ENCODE measurements at regions of chr9 and their contacts with region 1.

Region 1: GRCh38 chr9:130884980-130885696 is 11.5 kb downstream of the QRFP start:
- DNase-seq: peak; percentile 87
- H3K4me3 ChIP-seq: no peak overlapping the region
- H3K27ac ChIP-seq: peak overlapping the region in 3 of 4 donors; percentile 66 to 76 (median 74)
- H3K4me1 ChIP-seq: peaks cover 0 to 41% (median 37%) of the 10 kb centered on the region in 4 donors
- H3K27me3 ChIP-seq: no peaks in the 10 kb centered on the region
- CTCF ChIP-seq: no peak
- EP300 ChIP-seq: no peak
- POLR2A ChIP-seq: no peak

Region 2: DNA sequence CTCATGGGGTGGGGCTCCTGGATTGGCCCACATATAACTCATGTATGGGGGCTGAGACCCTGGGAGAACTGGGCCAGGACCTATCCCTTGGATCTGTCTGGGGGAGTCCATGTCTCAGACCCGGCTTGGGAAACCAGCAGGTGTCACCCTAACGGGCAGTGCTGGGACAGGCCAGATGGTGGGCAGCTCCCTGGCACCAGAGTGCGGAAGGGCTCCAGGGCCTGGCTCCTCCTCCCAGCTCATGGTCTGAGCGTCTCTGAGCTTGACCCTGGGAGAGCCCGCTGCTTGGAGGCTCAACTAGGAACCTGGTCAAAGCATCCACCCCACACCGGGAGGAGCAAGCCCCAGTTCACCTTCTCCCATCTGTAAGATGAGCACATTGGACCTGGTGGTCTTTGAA is 728.5 kb before region 1 on chr9:
- intact Hi-C with region 1: no loop called
- DNase-seq: no peak
- H3K4me3 ChIP-seq: no peak overlapping the region
- H3K27ac ChIP-seq: no peak overlapping the region
- H3K4me1 ChIP-seq: peaks cover 0 to 4% (median 0%) of the 10 kb centered on the region in 4 donors
- H3K27me3 ChIP-seq: no peaks in the 10 kb centered on the region
- CTCF ChIP-seq: peak in 1 of 4 experiments; percentile 14
- EP300 ChIP-seq: no peak
- POLR2A ChIP-seq: no peak

Region 3: GRCh38 chr9:131046581-131047202 is 161.6 kb after region 1 on chr9:
- intact Hi-C with region 1: loop called (anchors 10 kb)
- DNase-seq: peak; percentile 77
- H3K4me3 ChIP-seq: no peak overlapping the region
- H3K27ac ChIP-seq: no peak overlapping the region
- H3K4me1 ChIP-seq: peaks cover 0 to 6% (median 2%) of the 10 kb centered on the region in 4 donors
- H3K27me3 ChIP-seq: peaks cover 0 to 5% (median 0%) of the 10 kb centered on the region in 3 donors
- CTCF ChIP-seq: peak; percentile 67 to 91 (median 78)
- EP300 ChIP-seq: no peak
- POLR2A ChIP-seq: no peak

Measured in sigmoid colon (tissue), 7 donors.